Colonic mucosa (tissue), 4 donors: ENCODE measurements at regions of chr18 and their contacts with region 1.

Region 1: GRCh38 chr18:14086458-14087231 is 45.6 kb downstream of the ZNF519 start:
- DNase-seq: no peak
- H3K4me3 ChIP-seq: no peak overlapping the region
- H3K27ac ChIP-seq: no peak overlapping the region
- H3K4me1 ChIP-seq: no peaks in the 10 kb centered on the region
- H3K27me3 ChIP-seq: no peaks in the 10 kb centered on the region
- CTCF ChIP-seq: peak; percentile 51

Region 2: GRCh38 chr18:13797157-13797611 is 289.5 kb before region 1 on chr18:
- intact Hi-C with region 1: no loop called
- DNase-seq: no peak
- H3K4me3 ChIP-seq: no peak overlapping the region
- H3K27ac ChIP-seq: no peak overlapping the region
- H3K4me1 ChIP-seq: peaks cover 4% of the 10 kb centered on the region
- H3K27me3 ChIP-seq: no peaks in the 10 kb centered on the region
- CTCF ChIP-seq: no peak

Region 3: DNA sequence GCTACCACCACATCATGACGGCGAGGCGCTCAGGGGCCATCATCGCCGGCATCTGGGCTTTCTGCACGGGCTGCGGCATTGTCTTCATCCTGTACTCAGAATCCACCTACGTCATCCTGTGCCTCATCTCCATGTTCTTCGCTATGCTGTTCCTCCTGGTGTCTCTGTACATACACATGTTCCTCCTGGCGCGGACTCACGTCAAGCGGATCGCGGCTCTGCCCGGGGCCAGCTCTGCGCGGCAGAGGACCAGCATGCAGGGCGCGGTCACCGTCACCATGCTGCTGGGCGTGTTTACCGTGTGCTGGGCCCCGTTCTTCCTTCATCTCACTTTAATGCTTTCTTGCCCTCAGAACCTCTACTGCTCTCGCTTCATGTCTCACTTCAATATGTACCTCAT is 260.4 kb before region 1 on chr18:
- intact Hi-C with region 1: loop called (anchors 5 kb)
- DNase-seq: no peak
- H3K4me3 ChIP-seq: no peak overlapping the region
- H3K27ac ChIP-seq: no peak overlapping the region
- H3K4me1 ChIP-seq: no peaks in the 10 kb centered on the region
- H3K27me3 ChIP-seq: no peaks in the 10 kb centered on the region
- CTCF ChIP-seq: no peak